Naive thymus-derived CD4-positive, alpha-beta T cell (primary cell): ENCODE measurements at regions of chr1 and their contacts with region 1.

Region 1: GRCh38 chr1:156689035-156689952 is 12.1 kb upstream of the NES start:
- DNase-seq: peak; percentile 54 to 78 (median 71)
- ATAC-seq: peak; percentile 98
- H3K4me3 ChIP-seq: no peak overlapping the region
- H3K4me3 Mint-ChIP-seq: peak overlapping the region in 5 of 10 donors; percentile 48 to 78 (median 60)
- H3K27ac ChIP-seq: no peak overlapping the region
- H3K27ac Mint-ChIP-seq: peak overlapping the region in 3 of 9 donors; percentile 1 to 74 (median 60)
- H3K4me1 ChIP-seq: peaks cover 5 to 20% of the 10 kb centered on the region in 2 donors
- H3K4me1 Mint-ChIP-seq: peaks cover 20 to 35% (median 30%) of the 10 kb centered on the region in 7 donors
- H3K27me3 ChIP-seq: peaks cover 0 to 5% of the 10 kb centered on the region in 2 donors
- H3K27me3 Mint-ChIP-seq: peaks cover 38 to 62% (median 44%) of the 10 kb centered on the region in 5 donors

Region 2: DNA sequence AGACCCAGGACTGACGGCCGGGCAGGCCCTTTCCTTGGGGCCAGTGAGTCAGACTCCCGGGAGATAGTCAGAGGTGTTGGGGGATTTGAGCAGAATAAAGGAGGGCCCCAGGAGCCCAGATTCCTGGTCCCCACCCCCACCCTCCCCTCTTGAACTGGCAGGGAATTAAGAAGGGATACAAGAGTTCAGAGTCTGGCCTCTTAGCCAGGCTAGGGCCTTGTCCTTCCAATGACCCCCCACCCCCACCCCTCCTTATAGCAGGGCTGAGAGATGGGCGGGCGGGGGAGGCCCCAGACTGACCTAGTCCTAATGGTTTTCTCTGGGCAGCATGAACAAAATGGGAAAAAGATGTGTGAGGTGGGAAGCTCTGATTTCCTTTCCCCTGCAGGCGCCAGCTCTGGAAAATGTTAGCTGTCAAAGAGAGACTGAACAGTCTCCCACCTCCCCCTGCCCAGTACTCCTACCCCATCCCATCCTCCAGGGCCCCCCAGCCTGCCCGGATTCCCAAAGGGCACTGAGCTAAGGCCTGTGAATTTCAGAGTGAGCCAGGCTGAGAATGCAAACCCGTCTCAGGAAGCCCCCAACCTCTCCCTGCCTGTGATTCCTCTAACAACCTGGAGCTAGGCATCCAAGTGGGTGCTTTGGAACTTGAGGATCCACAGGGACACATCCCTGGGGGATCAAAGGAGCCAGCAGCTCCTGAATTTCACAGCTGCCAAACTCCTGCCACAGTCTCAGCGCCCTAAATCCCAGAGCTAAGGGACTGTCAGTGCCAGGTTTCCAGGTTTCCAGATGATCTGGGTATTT is 21.9 kb after region 1 on chr1:
- CTCF ChIA-PET with region 1: interaction called, 93 read pairs
- POLR2A ChIA-PET with region 1: interaction called, 13 read pairs
- intact Hi-C with region 1: loop called (anchors 1 kb)
- DNase-seq: no peak
- ATAC-seq: no peak
- H3K4me3 ChIP-seq: no peak overlapping the region
- H3K4me3 Mint-ChIP-seq: no peak overlapping the region
- H3K27ac ChIP-seq: no peak overlapping the region
- H3K27ac Mint-ChIP-seq: no peak overlapping the region
- H3K4me1 ChIP-seq: peaks cover 6 to 10% of the 10 kb centered on the region in 2 donors
- H3K4me1 Mint-ChIP-seq: peaks cover 9 to 21% (median 14%) of the 10 kb centered on the region in 7 donors
- H3K27me3 ChIP-seq: no peaks in the 10 kb centered on the region
- H3K27me3 Mint-ChIP-seq: peaks cover 0 to 11% (median 0%) of the 10 kb centered on the region in 5 donors

Region 3: GRCh38 chr1:156740679-156741612 is 51.7 kb after region 1 on chr1 and contains the start of gene MRPL24:
- CTCF ChIA-PET with region 1: interaction called, 3 read pairs
- POLR2A ChIA-PET with region 1: interaction called, 3 read pairs
- intact Hi-C with region 1: loop called in 1 of 2 experiments (anchors 1 kb)
- DNase-seq: peak; percentile 84 to 99 (median 98)
- ATAC-seq: peak; percentile 95
- H3K4me3 ChIP-seq: peak within 1 kb of the TSS; percentile 79
- H3K4me3 Mint-ChIP-seq: peak within 1 kb of the TSS; percentile 94 to 99 (median 98)
- H3K27ac ChIP-seq: peak within 1 kb of the TSS; percentile 90
- H3K27ac Mint-ChIP-seq: peak within 1 kb of the TSS; percentile 86 to 99 (median 98)
- H3K4me1 ChIP-seq: peaks cover 17 to 20% of the 10 kb centered on the region in 2 donors
- H3K4me1 Mint-ChIP-seq: peaks cover 23 to 50% (median 40%) of the 10 kb centered on the region in 7 donors
- H3K27me3 ChIP-seq: no peaks in the 10 kb centered on the region
- H3K27me3 Mint-ChIP-seq: no peaks in the 10 kb centered on the region
- total RNA-seq, gene MRPL24: 19.1 to 68.9 (median 47.2) TPM

Region 4: DNA sequence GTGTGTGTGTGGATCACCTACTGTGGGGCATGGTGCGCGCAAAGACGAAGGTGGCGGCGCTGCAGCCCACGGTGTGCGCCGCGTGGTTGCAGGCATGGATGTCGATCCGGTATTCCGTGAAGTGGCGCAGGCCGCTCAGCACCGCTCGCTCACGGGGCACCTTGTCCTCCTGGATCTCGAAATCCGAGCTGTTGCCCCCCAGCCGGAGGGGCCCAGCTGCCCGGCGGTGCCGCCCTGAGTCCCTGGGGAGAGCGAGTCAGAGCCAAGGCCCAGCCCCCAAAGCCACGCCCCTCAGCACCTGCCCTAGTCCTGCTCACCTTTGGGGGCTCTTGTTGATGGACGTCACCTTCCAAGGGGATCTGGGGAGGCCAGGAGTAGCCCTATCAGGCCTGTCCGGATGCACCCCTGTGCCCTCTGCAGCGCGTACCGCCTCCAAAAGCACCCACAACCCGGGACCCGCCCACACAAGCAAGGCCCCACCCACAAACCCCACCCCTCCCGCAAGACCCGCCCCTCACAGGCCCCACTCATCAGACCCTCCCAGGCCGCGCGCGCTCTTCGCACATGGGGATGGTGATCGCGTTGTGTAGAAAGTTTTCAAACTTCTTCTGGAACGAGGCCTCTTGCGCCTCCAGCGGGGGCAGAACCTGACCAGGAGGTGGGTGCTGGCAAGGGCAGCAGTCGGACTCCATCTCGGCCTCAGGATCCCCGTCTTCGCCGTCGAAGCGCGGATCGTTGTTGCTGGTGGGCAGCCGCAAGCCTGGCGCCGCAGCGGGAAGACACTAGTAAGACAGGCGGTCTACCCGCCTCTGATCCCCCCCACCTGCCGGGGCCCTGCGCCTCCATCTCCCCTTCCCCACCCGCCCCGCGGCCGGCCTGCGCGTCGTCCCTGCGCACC is 156.0 kb after region 1 on chr1:
- CTCF ChIA-PET with region 1: no interaction called
- POLR2A ChIA-PET with region 1: no interaction called
- intact Hi-C with region 1: no loop called
- DNase-seq: peak in 7 of 9 donors; percentile 19 to 47 (median 28)
- ATAC-seq: peak; percentile 64
- H3K4me3 ChIP-seq: peak overlapping the region; percentile 27
- H3K4me3 Mint-ChIP-seq: peak overlapping the region; percentile 54 to 82 (median 70)
- H3K27ac ChIP-seq: no peak overlapping the region
- H3K27ac Mint-ChIP-seq: peak overlapping the region in 1 of 9 donors; percentile 46
- H3K4me1 ChIP-seq: peaks cover 0 to 19% of the 10 kb centered on the region in 2 donors
- H3K4me1 Mint-ChIP-seq: peaks cover 10 to 43% (median 34%) of the 10 kb centered on the region in 7 donors
- H3K27me3 ChIP-seq: peaks cover 0 to 3% of the 10 kb centered on the region in 2 donors
- H3K27me3 Mint-ChIP-seq: peaks cover 32 to 60% (median 46%) of the 10 kb centered on the region in 5 donors

Region 5: DNA sequence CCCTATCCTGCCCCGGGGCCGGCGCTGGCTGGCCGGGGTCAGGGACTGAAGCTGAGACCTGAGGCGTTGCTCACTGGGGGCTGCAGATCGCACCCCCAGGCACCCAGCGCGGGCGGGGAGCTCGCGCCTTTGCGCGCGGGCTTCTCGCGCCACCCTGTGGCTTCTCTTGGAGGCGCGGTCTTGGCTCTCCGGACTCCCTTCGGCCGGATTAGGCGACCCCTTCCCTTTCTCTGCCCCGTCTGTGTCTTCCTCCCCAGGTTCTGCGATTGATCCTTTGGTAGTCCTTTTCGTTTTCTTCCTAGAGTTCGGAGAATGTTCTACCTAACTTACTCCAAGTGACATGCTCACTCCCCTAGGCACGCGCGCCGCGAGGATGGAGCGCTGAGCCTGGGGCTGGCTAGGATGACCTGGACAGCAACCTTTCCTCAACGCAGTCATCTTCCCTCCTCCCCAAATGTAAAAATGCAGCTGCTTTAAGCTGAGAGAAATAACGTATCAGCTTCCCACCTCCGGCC is 170.9 kb after region 1 on chr1:
- CTCF ChIA-PET with region 1: interaction called, 17 read pairs
- POLR2A ChIA-PET with region 1: no interaction called
- intact Hi-C with region 1: loop called (anchors 1 kb)
- DNase-seq: peak; percentile 21 to 77 (median 45)
- ATAC-seq: peak; percentile 71
- H3K4me3 ChIP-seq: peak overlapping the region; percentile 68
- H3K4me3 Mint-ChIP-seq: peak overlapping the region; percentile 70 to 92 (median 83)
- H3K27ac ChIP-seq: no peak overlapping the region
- H3K27ac Mint-ChIP-seq: peak overlapping the region in 5 of 9 donors; percentile 13 to 73 (median 59)
- H3K4me1 ChIP-seq: peaks cover 5 to 20% of the 10 kb centered on the region in 2 donors
- H3K4me1 Mint-ChIP-seq: peaks cover 17 to 64% (median 24%) of the 10 kb centered on the region in 7 donors
- H3K27me3 ChIP-seq: peaks cover 12 to 31% of the 10 kb centered on the region in 2 donors
- H3K27me3 Mint-ChIP-seq: peaks cover 43 to 53% (median 51%) of the 10 kb centered on the region in 5 donors

Region 6: GRCh38 chr1:157000686-157001085 is 311.4 kb after region 1 on chr1:
- CTCF ChIA-PET with region 1: no interaction called
- POLR2A ChIA-PET with region 1: no interaction called
- intact Hi-C with region 1: no loop called
- DNase-seq: no peak
- ATAC-seq: no peak
- H3K4me3 ChIP-seq: no peak overlapping the region
- H3K4me3 Mint-ChIP-seq: no peak overlapping the region
- H3K27ac ChIP-seq: no peak overlapping the region
- H3K27ac Mint-ChIP-seq: no peak overlapping the region
- H3K4me1 ChIP-seq: no peaks in the 10 kb centered on the region
- H3K4me1 Mint-ChIP-seq: no peaks in the 10 kb centered on the region
- H3K27me3 ChIP-seq: no peaks in the 10 kb centered on the region
- H3K27me3 Mint-ChIP-seq: peaks cover 0 to 50% (median 11%) of the 10 kb centered on the region in 5 donors